Right cardiac atrium (tissue), 5 donors: ENCODE measurements at regions of chr1 and their contacts with region 1.

Region 1: GRCh38 chr1:203378556-203379245 is 27.8 kb upstream of the FMOD start:
- DNase-seq: no peak
- ATAC-seq: peak in 1 of 2 donors; percentile 35
- H3K4me3 ChIP-seq: no peak overlapping the region
- H3K27ac ChIP-seq: no peak overlapping the region
- H3K4me1 ChIP-seq: peaks cover 16% of the 10 kb centered on the region
- H3K27me3 ChIP-seq: no peaks in the 10 kb centered on the region

Region 2: GRCh38 chr1:203406446-203407045 is 27.8 kb after region 1 on chr1:
- intact Hi-C with region 1: loop called in 1 of 4 experiments (anchors 2 kb)
- DNase-seq: peak; percentile 71 to 92 (median 89)
- ATAC-seq: peak; percentile 79 to 84
- H3K4me3 ChIP-seq: no peak overlapping the region
- H3K27ac ChIP-seq: peak overlapping the region; percentile 93
- H3K4me1 ChIP-seq: no peaks in the 10 kb centered on the region
- H3K27me3 ChIP-seq: no peaks in the 10 kb centered on the region